ENCODE measurements at regions of chr4 and their contacts with region 1.

Region 1: GRCh38 chr4:39365830-39366771 is at the start of gene RFC1:
- DNase-seq: peak; percentile 95
- H3K4me3 ChIP-seq: peak within 1 kb of the TSS; percentile 88
- H3K4me3 Mint-ChIP-seq: peak within 1 kb of the TSS; percentile 96
- H3K27ac Mint-ChIP-seq: peak within 1 kb of the TSS; percentile 98
- H3K4me1 ChIP-seq: peaks cover 4% of the 10 kb centered on the region; the same call in 1 of the 2 replicates
- H3K4me1 Mint-ChIP-seq: peaks cover 13% of the 10 kb centered on the region
- H3K27me3 ChIP-seq: no peaks in the 10 kb centered on the region
- H3K27me3 Mint-ChIP-seq: no peaks in the 10 kb centered on the region
- CTCF ChIP-seq: no peak
- total RNA-seq, gene RFC1: 58.8 and 63.4 TPM in 2 replicates

Region 2: GRCh38 chr4:39020130-39020529 is 346.0 kb before region 1 on chr4:
- CTCF ChIA-PET with region 1: no interaction called
- POLR2A ChIA-PET with region 1: no interaction called
- intact Hi-C with region 1: no loop called
- DNase-seq: no peak
- H3K4me3 ChIP-seq: no peak overlapping the region
- H3K4me3 Mint-ChIP-seq: no peak overlapping the region
- H3K27ac Mint-ChIP-seq: no peak overlapping the region
- H3K4me1 ChIP-seq: no peaks in the 10 kb centered on the region
- H3K4me1 Mint-ChIP-seq: no peaks in the 10 kb centered on the region
- H3K27me3 ChIP-seq: no peaks in the 10 kb centered on the region
- H3K27me3 Mint-ChIP-seq: no peaks in the 10 kb centered on the region
- CTCF ChIP-seq: no peak

Region 3: GRCh38 chr4:39181905-39182638 is 184.0 kb before region 1 on chr4 and contains the start of gene WDR19:
- CTCF ChIA-PET with region 1: interaction called, 4 read pairs
- POLR2A ChIA-PET with region 1: no interaction called
- intact Hi-C with region 1: loop called (anchors 2 kb)
- DNase-seq: peak; percentile 98
- H3K4me3 ChIP-seq: peak within 1 kb of the TSS; percentile 56
- H3K4me3 Mint-ChIP-seq: no peak within 1 kb of the TSS
- H3K27ac Mint-ChIP-seq: no peak within 1 kb of the TSS
- H3K4me1 ChIP-seq: peaks cover 5% of the 10 kb centered on the region; the same call in 1 of the 2 replicates
- H3K4me1 Mint-ChIP-seq: no peaks in the 10 kb centered on the region
- H3K27me3 ChIP-seq: no peaks in the 10 kb centered on the region
- H3K27me3 Mint-ChIP-seq: peaks cover 2% of the 10 kb centered on the region
- CTCF ChIP-seq: peak; percentile 36 to 54
- total RNA-seq, gene WDR19: 9.5 and 11.9 TPM in 2 replicates

Region 4: GRCh38 chr4:39406763-39407583 is 40.9 kb after region 1 on chr4 and contains the start of gene KLB:
- CTCF ChIA-PET with region 1: interaction called, 3 read pairs
- POLR2A ChIA-PET with region 1: interaction called, 15 read pairs
- intact Hi-C with region 1: loop called (anchors 5 kb)
- DNase-seq: peak; percentile 67 to 77
- H3K4me3 ChIP-seq: peak within 1 kb of the TSS; percentile 32
- H3K4me3 Mint-ChIP-seq: peak within 1 kb of the TSS; percentile 83
- H3K27ac Mint-ChIP-seq: peak within 1 kb of the TSS; percentile 68
- H3K4me1 ChIP-seq: no peaks in the 10 kb centered on the region; the same call in 1 of the 2 replicates
- H3K4me1 Mint-ChIP-seq: peaks cover 7% of the 10 kb centered on the region
- H3K27me3 ChIP-seq: no peaks in the 10 kb centered on the region
- H3K27me3 Mint-ChIP-seq: no peaks in the 10 kb centered on the region
- CTCF ChIP-seq: no peak
- total RNA-seq, gene KLB: 2.2 TPM in 2 replicates

Region 5: GRCh38 chr4:39436218-39436560 is 70.1 kb after region 1 on chr4:
- CTCF ChIA-PET with region 1: interaction called, 10 read pairs
- POLR2A ChIA-PET with region 1: no interaction called
- intact Hi-C with region 1: loop called (anchors 2 kb)
- DNase-seq: no peak
- H3K4me3 ChIP-seq: no peak overlapping the region
- H3K4me3 Mint-ChIP-seq: no peak overlapping the region
- H3K27ac Mint-ChIP-seq: no peak overlapping the region
- H3K4me1 ChIP-seq: peaks cover 3% of the 10 kb centered on the region; the same call in 1 of the 2 replicates
- H3K4me1 Mint-ChIP-seq: no peaks in the 10 kb centered on the region
- H3K27me3 ChIP-seq: no peaks in the 10 kb centered on the region
- H3K27me3 Mint-ChIP-seq: no peaks in the 10 kb centered on the region
- CTCF ChIP-seq: no peak

Region 6: GRCh38 chr4:39458505-39459300 is 92.6 kb after region 1 on chr4 and contains the starts of genes LIAS and RPL9:
- CTCF ChIA-PET with region 1: no interaction called
- POLR2A ChIA-PET with region 1: interaction called, 13 read pairs
- intact Hi-C with region 1: loop called (anchors 5 kb)
- DNase-seq: peak; percentile 95 to 98
- H3K4me3 ChIP-seq: peak within 1 kb of the TSS; percentile 76
- H3K4me3 Mint-ChIP-seq: peak within 1 kb of the TSS; percentile 88
- H3K27ac Mint-ChIP-seq: peak within 1 kb of the TSS; percentile 96
- H3K4me1 ChIP-seq: peaks cover 11% of the 10 kb centered on the region
- H3K4me1 Mint-ChIP-seq: peaks cover 6% of the 10 kb centered on the region
- H3K27me3 ChIP-seq: no peaks in the 10 kb centered on the region
- H3K27me3 Mint-ChIP-seq: no peaks in the 10 kb centered on the region
- CTCF ChIP-seq: no peak
- total RNA-seq, gene LIAS: 19.5 and 21.1 TPM in 2 replicates
- total RNA-seq, gene RPL9: 976 and 978 TPM in 2 replicates